Mammary epithelial cell (primary cell): ENCODE measurements at regions of chr18 and their contacts with region 1.

Region 1: DNA sequence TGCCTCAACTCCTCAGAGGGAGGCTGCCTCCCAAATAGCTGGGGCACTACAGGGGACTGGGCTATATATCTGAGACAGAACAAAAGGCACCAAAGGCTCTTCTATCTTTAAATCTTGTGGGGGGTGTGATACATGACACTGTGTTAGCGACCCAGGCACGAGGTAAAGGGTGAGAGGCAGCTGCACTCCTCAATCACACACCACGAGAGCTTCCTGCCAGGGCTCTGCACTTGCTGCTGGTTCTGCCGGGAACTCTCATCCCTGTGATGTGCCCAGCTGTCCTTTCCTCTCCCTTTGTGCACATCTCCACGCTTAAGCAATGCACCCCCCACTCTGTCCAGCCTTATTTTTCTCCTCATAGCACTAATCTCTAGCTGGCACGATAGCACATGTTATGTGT is 32.4 kb downstream of the NPC1 start:
- DNase-seq: no peak
- H3K4me3 ChIP-seq: no peak overlapping the region
- H3K27ac ChIP-seq: no peak overlapping the region
- H3K4me1 ChIP-seq: no peaks in the 10 kb centered on the region
- H3K27me3 ChIP-seq: no peaks in the 10 kb centered on the region
- CTCF ChIP-seq: no peak

Region 2: GRCh38 chr18:23433360-23433759 is 120.5 kb before region 1 on chr18:
- CTCF ChIA-PET with region 1: no interaction called
- dilution Hi-C with region 1: no loop called
- in situ Hi-C with region 1: no loop called
- intact Hi-C with region 1: no loop called
- DNase-seq: no peak
- H3K4me3 ChIP-seq: no peak overlapping the region
- H3K27ac ChIP-seq: no peak overlapping the region
- H3K4me1 ChIP-seq: peaks cover 3% of the 10 kb centered on the region
- H3K27me3 ChIP-seq: no peaks in the 10 kb centered on the region
- CTCF ChIP-seq: no peak

Region 3: DNA sequence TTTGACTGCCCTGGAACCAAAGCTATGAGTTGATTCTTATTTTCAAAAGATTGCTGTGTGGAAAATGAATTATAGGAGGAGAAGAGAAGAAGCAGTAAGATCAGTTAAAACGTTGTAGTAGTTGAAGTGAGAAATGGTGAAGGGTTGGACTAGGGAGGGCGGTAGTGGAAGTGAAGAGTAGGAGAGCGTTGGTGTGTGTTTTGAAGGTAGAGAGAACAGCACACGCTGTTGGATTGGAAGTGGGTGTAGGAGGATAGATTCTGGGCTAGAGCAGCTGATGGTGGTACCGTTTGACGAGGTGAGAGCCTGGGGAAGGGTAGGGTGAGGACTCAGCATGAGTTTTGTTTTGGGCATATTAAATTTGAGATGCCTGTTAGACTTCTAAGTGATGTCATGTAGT is 82.4 kb before region 1 on chr18:
- CTCF ChIA-PET with region 1: no interaction called
- dilution Hi-C with region 1: loop called (anchors 5 kb)
- in situ Hi-C with region 1: no loop called
- intact Hi-C with region 1: no loop called
- DNase-seq: no peak
- H3K4me3 ChIP-seq: no peak overlapping the region
- H3K27ac ChIP-seq: no peak overlapping the region
- H3K4me1 ChIP-seq: no peaks in the 10 kb centered on the region
- H3K27me3 ChIP-seq: no peaks in the 10 kb centered on the region
- CTCF ChIP-seq: no peak